Activated naive CD4-positive, alpha-beta T cell treated with anti-CD3 and anti-CD28 coated beads for 36 hours (primary cell): ENCODE measurements at regions of chr1 and their contacts with region 1.

Region 1: GRCh38 chr1:22025368-22026155 is 24.1 kb downstream of the CELA3A start:
- DNase-seq: peak; percentile 94
- H3K4me3 Mint-ChIP-seq: peak overlapping the region; percentile 88
- H3K27ac Mint-ChIP-seq: peak overlapping the region; percentile 97
- H3K4me1 Mint-ChIP-seq: peaks cover 54% of the 10 kb centered on the region
- H3K27me3 Mint-ChIP-seq: no peaks in the 10 kb centered on the region

Region 2: DNA sequence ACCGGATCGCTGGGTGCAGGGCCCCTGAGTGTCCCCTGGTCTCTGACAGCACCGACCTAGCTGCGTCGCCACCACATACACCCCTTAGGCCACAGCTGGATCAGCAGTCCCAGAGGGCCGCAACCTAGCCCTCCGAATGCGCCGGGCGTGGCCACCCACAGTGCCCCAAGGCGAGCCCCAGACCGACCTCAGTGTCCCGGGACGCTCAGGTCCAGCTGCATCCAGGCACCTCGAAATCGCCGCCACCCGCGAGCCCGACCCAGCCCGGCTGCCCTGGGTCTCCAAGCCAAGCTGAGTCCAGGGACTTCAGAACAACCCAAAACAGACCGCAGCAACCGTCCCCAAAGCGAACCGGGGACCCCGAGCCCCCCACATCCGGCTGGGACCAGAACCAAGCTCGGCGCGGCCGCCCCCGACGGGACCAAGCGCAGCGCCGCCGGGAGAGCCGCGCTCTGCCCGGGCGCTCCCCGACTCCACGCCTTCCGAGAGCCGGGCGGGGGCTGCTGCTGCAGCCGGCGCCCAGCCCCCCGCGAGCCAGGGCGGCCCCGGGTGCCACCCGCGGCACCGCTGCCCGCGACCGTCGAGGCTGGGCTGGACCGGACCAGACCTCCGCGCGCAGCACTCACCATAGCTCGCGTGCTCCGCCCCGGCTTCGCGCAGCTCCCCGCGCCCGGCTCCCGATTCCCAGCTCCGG is 680.7 kb before region 1 on chr1:
- CTCF ChIA-PET with region 1: interaction called, 3 read pairs
- intact Hi-C with region 1: loop called (anchors 10 kb)
- DNase-seq: no peak
- H3K4me3 Mint-ChIP-seq: peak overlapping the region; percentile 92
- H3K27ac Mint-ChIP-seq: peak overlapping the region; percentile 92
- H3K4me1 Mint-ChIP-seq: peaks cover 39% of the 10 kb centered on the region
- H3K27me3 Mint-ChIP-seq: no peaks in the 10 kb centered on the region

Region 3: GRCh38 chr1:22039594-22040285 is 14.2 kb after region 1 on chr1:
- CTCF ChIA-PET with region 1: interaction called, 27 read pairs
- intact Hi-C with region 1: loop called (anchors 1 kb)
- DNase-seq: peak; percentile 96
- H3K4me3 Mint-ChIP-seq: peak overlapping the region; percentile 69
- H3K27ac Mint-ChIP-seq: peak overlapping the region; percentile 97
- H3K4me1 Mint-ChIP-seq: peaks cover 52% of the 10 kb centered on the region
- H3K27me3 Mint-ChIP-seq: no peaks in the 10 kb centered on the region

Region 4: GRCh38 chr1:22052115-22053016 is 26.8 kb after region 1 on chr1 and contains the start of gene CDC42:
- CTCF ChIA-PET with region 1: interaction called, 24 read pairs
- intact Hi-C with region 1: loop called (anchors 1 kb)
- DNase-seq: peak; percentile 98
- H3K4me3 Mint-ChIP-seq: peak within 1 kb of the TSS; percentile 95
- H3K27ac Mint-ChIP-seq: peak within 1 kb of the TSS; percentile 98
- H3K4me1 Mint-ChIP-seq: peaks cover 63% of the 10 kb centered on the region
- H3K27me3 Mint-ChIP-seq: no peaks in the 10 kb centered on the region
- total RNA-seq, gene CDC42: 318 to 322 TPM

Region 5: GRCh38 chr1:22089787-22090186 is 64.2 kb after region 1 on chr1:
- CTCF ChIA-PET with region 1: interaction called, 8 read pairs
- intact Hi-C with region 1: loop called (anchors 1 kb)
- DNase-seq: no peak
- H3K4me3 Mint-ChIP-seq: peak overlapping the region; percentile 38
- H3K27ac Mint-ChIP-seq: peak overlapping the region; percentile 77
- H3K4me1 Mint-ChIP-seq: peaks cover 89% of the 10 kb centered on the region
- H3K27me3 Mint-ChIP-seq: no peaks in the 10 kb centered on the region

Region 6: DNA sequence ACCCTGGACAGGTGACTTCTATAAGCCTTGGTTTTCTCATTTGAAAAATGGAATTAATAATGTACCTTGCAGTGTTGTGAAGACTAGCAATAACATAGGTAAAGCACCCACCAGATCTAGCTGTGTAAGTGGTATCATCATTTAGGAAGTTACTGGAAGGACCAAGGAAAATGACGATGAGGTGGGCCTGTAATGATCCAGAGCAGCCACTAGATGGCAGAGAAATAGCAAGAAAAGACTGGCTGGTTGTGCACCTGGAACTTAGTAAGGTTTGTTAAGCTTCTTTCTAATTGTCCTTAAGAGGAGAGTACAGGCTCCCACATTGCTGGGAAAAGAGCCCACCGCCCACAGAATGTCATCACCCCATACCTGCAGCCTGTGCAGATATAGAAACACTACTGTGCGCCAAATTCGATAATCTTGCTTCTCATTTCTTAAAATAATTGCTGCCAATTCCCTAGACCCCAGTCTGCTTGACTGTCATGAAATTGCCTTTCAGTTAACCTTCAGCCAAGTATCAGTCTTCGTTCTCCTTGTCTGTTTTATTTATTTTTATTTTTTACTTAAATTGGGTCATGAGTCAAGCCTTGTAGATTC is 80.1 kb after region 1 on chr1:
- CTCF ChIA-PET with region 1: interaction called, 4 read pairs
- intact Hi-C with region 1: loop called (anchors 1 kb)
- DNase-seq: peak; percentile 50
- H3K4me3 Mint-ChIP-seq: no peak overlapping the region
- H3K27ac Mint-ChIP-seq: peak overlapping the region; percentile 74
- H3K4me1 Mint-ChIP-seq: peaks cover 53% of the 10 kb centered on the region
- H3K27me3 Mint-ChIP-seq: no peaks in the 10 kb centered on the region

Region 7: GRCh38 chr1:22451702-22452474 is 426.3 kb after region 1 on chr1 and contains the start of gene ZBTB40:
- CTCF ChIA-PET with region 1: no interaction called
- intact Hi-C with region 1: loop called (anchors 2 kb)
- DNase-seq: peak; percentile 96
- H3K4me3 Mint-ChIP-seq: peak within 1 kb of the TSS; percentile 85
- H3K27ac Mint-ChIP-seq: peak within 1 kb of the TSS; percentile 80
- H3K4me1 Mint-ChIP-seq: peaks cover 35% of the 10 kb centered on the region
- H3K27me3 Mint-ChIP-seq: no peaks in the 10 kb centered on the region
- total RNA-seq, gene ZBTB40: 11.5 to 13.1 TPM

Region 8: DNA sequence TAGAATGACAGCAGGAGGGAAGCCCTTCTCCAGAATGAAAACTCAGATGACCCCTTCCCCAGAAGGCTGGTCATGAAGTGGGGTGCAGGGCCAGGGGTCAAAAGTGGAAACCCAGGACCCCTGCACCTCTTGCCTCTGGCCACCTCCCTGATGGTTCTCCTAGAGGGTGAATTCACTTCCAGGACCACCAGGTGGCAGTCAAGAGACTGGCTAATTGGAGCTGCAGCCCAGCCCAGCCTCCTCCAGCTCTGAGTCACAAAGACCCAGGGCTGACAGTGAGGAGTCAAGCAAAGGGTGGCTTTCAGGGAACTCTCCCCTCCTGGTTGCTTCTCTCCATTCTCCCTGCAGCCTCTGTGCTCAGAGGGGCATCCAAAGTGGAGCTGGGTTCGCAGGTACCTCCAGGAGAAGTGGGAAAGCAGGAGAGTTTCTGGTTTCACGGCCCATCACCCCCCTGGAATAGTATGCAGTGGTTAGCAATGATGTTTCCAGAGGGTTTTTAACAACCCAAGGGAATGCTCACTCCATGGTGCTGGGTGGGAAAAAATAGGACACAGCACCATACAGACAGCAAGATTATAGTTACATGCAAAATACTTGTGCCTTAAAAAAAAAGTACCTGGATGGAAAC is 679.0 kb after region 1 on chr1:
- CTCF ChIA-PET with region 1: no interaction called
- intact Hi-C with region 1: no loop called
- DNase-seq: peak; percentile 91
- H3K4me3 Mint-ChIP-seq: no peak overlapping the region
- H3K27ac Mint-ChIP-seq: no peak overlapping the region
- H3K4me1 Mint-ChIP-seq: no peaks in the 10 kb centered on the region
- H3K27me3 Mint-ChIP-seq: peaks cover 20% of the 10 kb centered on the region